ENCODE measurements at regions of chr12 and their contacts with region 1.

Region 1: DNA sequence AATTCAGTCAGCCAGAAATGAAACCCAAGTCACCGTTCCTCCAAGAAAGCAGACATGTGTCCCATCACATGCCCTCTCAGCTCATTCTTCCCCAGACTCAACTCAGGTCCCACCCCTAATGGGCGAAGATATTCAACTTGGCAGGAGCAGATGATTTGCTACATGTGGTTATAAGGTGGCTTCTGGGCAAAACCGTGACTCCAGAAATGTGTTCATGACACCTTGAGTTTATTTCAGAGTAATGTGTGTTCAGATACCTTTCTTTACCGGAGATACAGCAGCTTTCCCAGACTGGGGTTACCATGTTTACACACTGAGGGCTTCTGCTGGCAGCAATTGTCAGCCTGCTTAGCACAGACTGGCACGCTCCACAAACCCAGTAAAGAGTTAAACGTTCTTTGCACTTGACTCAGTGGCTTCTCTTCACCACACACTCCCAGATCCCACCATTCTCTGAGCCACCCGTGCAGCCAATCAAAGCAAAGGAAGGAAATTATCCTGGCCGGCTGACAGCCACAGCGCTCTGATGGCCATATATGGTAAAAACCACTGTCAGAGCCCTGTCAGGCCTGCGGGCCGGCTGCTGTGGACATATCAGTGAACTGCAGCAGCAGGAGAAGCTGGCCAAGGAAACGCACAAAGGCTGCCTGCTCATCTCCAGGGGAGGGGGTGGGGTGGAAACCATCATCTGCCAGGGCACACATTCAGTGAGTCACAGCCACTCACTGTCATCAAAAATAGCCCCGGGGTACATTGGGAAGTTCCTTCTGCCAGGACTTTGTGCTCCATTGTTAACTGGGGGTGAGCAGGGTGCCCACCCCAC is 39.9 kb downstream of the CORO1C start:
- DNase-seq: peak; percentile 99
- H3K4me3 ChIP-seq: peak overlapping the region in 3 of 4 donors; percentile 9 to 30 (median 23)
- H3K27ac ChIP-seq: peak overlapping the region; percentile 95 to 100 (median 98)
- H3K4me1 ChIP-seq: peaks cover 0 to 95% (median 90%) of the 10 kb centered on the region in 4 donors
- H3K27me3 ChIP-seq: no peaks in the 10 kb centered on the region
- CTCF ChIP-seq: peak in 3 of 4 experiments; percentile 38 to 76 (median 70)
- EP300 ChIP-seq: peak; percentile 66 to 94 (median 83)
- POLR2A ChIP-seq: peak; percentile 25 to 30

Region 2: GRCh38 chr12:108570743-108571608 is 120.4 kb before region 1 on chr12:
- intact Hi-C with region 1: no loop called
- DNase-seq: no peak
- H3K4me3 ChIP-seq: no peak overlapping the region
- H3K27ac ChIP-seq: no peak overlapping the region
- H3K4me1 ChIP-seq: peaks cover 0 to 30% (median 19%) of the 10 kb centered on the region in 4 donors
- H3K27me3 ChIP-seq: no peaks in the 10 kb centered on the region
- CTCF ChIP-seq: no peak
- EP300 ChIP-seq: no peak
- POLR2A ChIP-seq: no peak

Region 3: DNA sequence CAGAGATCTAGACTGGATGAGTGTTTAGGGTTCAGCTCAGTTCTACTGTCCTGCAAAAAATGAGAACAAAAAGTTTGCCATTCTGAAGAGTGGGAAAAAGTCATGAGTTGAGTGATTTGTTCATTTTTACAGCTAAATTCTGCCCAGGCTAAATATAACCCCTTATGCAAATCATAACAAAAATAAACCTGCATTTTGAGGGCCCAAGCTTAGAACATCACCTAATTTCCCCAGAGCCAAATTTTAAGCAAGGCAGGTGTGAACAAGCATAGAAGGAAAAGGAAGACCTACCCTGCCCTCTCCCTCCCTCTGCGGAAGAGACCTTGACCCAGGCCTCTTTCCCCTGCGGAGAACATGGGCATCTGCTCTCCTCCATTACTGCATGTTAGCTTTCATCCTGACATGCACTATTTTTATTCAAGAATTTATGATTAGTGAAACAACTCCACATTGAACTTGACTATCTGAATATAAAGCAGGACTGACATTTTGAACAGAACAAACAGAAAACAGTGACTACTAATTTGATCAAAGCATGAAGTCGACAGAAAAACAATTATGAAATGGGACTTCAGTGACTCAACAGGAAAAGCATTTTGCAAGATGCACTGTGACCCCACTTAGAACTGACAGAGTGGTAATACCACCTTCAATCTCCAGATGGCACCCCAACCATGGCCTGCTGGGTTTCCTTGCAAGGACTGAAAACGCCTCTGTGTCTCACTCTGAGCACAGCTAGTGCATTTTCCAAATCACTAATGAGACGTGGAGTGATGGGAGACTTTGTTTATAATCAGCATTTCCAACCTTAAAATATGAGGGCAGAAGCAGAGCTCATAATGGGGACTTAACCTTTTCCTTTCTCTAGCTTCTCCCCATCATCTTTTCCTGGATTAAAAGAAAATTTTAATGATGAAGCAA is 26.8 kb before region 1 on chr12:
- intact Hi-C with region 1: loop called (anchors 2 kb)
- DNase-seq: peak; percentile 97
- H3K4me3 ChIP-seq: no peak overlapping the region
- H3K27ac ChIP-seq: peak overlapping the region; percentile 83 to 99 (median 86)
- H3K4me1 ChIP-seq: peaks cover 0 to 82% (median 80%) of the 10 kb centered on the region in 4 donors
- H3K27me3 ChIP-seq: no peaks in the 10 kb centered on the region
- CTCF ChIP-seq: peak; percentile 88 to 96 (median 92)
- EP300 ChIP-seq: peak in 1 of 4 donors; percentile 19
- POLR2A ChIP-seq: no peak

Region 4: GRCh38 chr12:108681317-108681716 is 10.1 kb before region 1 on chr12:
- intact Hi-C with region 1: loop called (anchors 2 kb)
- DNase-seq: no peak
- H3K4me3 ChIP-seq: no peak overlapping the region
- H3K27ac ChIP-seq: peak overlapping the region; percentile 48 to 100 (median 84)
- H3K4me1 ChIP-seq: peaks cover 2 to 96% (median 73%) of the 10 kb centered on the region in 4 donors
- H3K27me3 ChIP-seq: no peaks in the 10 kb centered on the region
- CTCF ChIP-seq: no peak
- EP300 ChIP-seq: no peak
- POLR2A ChIP-seq: no peak